ENCODE measurements at regions of chr22 and their contacts with region 1.

Region 1: DNA sequence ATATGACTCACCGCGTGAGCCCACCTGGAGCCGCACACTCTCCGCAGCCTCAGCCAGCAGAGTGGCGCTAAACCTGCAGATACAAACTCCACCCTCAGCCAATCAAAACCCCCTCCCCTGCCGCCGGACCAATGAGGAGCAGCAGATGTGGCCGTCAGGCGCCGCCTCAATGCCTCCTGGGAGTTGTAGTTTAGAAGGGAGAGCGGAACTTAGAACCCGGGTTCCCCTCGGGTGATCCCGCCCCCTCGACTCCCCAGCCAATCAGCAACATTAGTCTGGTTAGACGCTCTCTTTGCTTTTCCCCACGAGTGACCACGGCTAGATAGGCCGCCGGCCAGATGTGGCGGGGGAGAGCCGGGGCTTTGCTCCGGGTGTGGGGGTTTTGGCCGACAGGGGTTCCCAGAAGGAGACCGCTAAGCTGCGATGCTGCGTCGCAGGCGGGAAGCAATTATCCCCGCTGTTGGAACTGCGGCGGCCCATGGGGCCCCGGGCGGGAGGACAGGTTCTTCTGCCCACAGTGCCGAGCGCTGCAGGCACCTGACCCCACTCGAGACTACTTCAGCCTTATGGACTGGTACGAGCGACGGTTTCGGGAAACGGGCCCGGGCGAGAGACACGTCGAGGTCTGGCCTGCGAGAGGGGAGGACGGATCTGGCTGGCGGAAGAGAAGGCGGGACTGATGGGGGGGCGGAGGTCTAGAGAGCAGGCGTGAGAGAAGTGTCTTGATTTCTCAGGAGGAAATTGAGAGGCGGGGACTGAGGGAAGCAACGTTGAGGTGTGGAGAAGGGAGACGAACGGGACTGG is at the starts of genes CHEK2 and HSCB:
- DNase-seq: peak; percentile 99
- H3K4me3 Mint-ChIP-seq: peak within 1 kb of the TSS; percentile 89
- H3K27ac Mint-ChIP-seq: peak within 1 kb of the TSS; percentile 96
- H3K4me1 Mint-ChIP-seq: peaks cover 20% of the 10 kb centered on the region
- H3K27me3 Mint-ChIP-seq: no peaks in the 10 kb centered on the region
- total RNA-seq, gene CHEK2: 47.8 to 52.6 TPM
- total RNA-seq, gene HSCB: 12.7 to 13.3 TPM

Region 2: GRCh38 chr22:28464167-28464566 is 277.8 kb before region 1 on chr22:
- CTCF ChIA-PET with region 1: no interaction called
- intact Hi-C with region 1: no loop called
- DNase-seq: no peak
- H3K4me3 Mint-ChIP-seq: no peak overlapping the region
- H3K27ac Mint-ChIP-seq: no peak overlapping the region
- H3K4me1 Mint-ChIP-seq: no peaks in the 10 kb centered on the region
- H3K27me3 Mint-ChIP-seq: no peaks in the 10 kb centered on the region

Region 3: GRCh38 chr22:28674121-28674563 is 67.8 kb before region 1 on chr22:
- CTCF ChIA-PET with region 1: interaction called, 3 read pairs
- intact Hi-C with region 1: loop called (anchors 2 kb)
- DNase-seq: peak; percentile 27
- H3K4me3 Mint-ChIP-seq: peak overlapping the region; percentile 55
- H3K27ac Mint-ChIP-seq: peak overlapping the region; percentile 87
- H3K4me1 Mint-ChIP-seq: peaks cover 28% of the 10 kb centered on the region
- H3K27me3 Mint-ChIP-seq: peaks cover 64% of the 10 kb centered on the region

Region 4: DNA sequence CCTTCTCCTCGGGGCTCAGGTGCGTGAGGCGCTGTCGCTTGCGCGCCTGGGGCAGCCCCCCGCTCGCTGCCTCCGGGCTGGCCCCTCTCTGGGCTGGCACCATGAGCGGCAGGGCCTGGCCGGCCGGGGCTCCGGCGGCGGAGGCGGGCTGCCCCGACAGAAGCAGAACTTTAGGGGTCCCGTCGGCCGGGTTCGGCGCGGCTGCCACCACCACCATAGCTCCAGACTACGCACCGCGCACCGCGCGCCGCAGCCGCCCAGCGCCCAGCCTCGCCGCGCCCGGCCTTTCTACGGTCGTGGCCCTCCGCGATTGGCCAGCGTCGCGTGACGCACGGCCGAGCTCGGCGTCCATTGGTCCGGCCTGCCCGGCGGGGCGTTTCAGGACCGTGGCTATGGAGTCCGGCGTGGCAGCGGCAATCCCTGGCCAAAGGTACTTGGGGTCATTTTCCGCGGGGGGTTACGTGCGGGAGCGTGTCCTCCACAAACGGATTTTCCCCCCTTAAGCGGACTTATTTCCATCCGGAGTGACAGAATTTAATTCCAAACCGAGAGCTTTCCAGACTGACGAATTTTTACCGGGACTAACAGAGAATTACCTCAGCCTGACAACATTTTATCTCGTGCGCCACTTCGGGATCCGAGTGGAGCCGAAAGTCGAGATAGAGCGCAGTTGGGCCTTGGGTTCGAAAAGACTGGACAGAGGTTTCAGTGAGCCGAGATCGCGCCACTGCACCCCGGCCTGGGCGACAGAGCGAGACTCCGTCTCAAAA is 58.5 kb after region 1 on chr22 and contains the start of gene XBP1:
- CTCF ChIA-PET with region 1: no interaction called
- intact Hi-C with region 1: loop called (anchors 1 kb)
- DNase-seq: peak; percentile 90
- H3K4me3 Mint-ChIP-seq: peak within 1 kb of the TSS; percentile 89
- H3K27ac Mint-ChIP-seq: peak within 1 kb of the TSS; percentile 97
- H3K4me1 Mint-ChIP-seq: peaks cover 42% of the 10 kb centered on the region
- H3K27me3 Mint-ChIP-seq: no peaks in the 10 kb centered on the region
- total RNA-seq, gene XBP1: 106 to 108 TPM

Region 5: DNA sequence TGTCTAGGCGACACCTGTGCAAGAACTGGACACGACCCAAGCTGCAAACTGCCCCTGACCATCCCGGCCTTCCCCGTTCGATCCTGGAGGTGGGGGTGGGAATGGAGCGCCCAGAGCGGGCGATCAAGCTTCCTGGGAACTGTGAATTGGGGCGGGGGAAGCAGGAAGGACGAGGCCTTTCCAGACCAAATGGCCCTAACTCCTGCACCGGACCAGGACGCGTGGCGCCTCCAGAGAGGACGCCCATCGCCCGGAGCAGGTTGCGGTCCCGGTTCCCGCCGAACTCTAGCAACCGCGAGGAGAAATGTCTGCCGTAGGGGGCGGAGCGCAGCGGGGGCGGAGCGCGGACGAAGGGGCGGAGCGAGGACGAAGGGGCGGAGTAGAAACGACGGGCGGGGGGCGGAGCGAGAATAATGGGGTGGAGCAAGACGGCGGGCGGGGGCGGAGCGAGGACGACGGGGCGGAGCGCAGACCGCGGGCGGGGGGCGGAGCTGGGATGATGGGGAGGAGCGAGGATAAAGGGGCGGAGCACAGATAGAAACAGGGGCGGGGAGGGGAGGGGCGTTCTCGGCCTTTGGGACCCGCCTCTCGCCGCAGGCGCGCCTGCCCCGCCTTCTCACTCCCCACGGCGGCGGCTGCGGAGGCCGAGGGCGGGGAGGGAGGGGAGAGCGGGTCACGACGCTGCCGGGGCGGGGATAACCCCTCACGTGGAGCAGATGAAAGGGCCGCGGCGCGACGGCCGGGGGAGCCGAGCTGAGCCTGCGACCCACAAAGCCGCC is 141.1 kb after region 1 on chr22 and contains the start of gene ZNRF3:
- CTCF ChIA-PET with region 1: no interaction called
- intact Hi-C with region 1: loop called (anchors 1 kb)
- DNase-seq: peak; percentile 92
- H3K4me3 Mint-ChIP-seq: peak within 1 kb of the TSS; percentile 81
- H3K27ac Mint-ChIP-seq: no peak within 1 kb of the TSS
- H3K4me1 Mint-ChIP-seq: peaks cover 19% of the 10 kb centered on the region
- H3K27me3 Mint-ChIP-seq: peaks cover 17% of the 10 kb centered on the region
- total RNA-seq, gene ZNRF3: 1.6 to 2.2 TPM

Region 6: GRCh38 chr22:29553351-29554224 is 811.6 kb after region 1 on chr22 and contains the start of gene THOC5:
- CTCF ChIA-PET with region 1: no interaction called
- intact Hi-C with region 1: loop called (anchors 5 kb)
- DNase-seq: peak; percentile 93
- H3K4me3 Mint-ChIP-seq: peak within 1 kb of the TSS; percentile 97
- H3K27ac Mint-ChIP-seq: peak within 1 kb of the TSS; percentile 80
- H3K4me1 Mint-ChIP-seq: peaks cover 25% of the 10 kb centered on the region
- H3K27me3 Mint-ChIP-seq: no peaks in the 10 kb centered on the region
- total RNA-seq, gene THOC5: 54.8 to 55.1 TPM